Colonic mucosa (tissue), 4 donors: ENCODE measurements at regions of chr14 and their contacts with region 1.

Region 1: DNA sequence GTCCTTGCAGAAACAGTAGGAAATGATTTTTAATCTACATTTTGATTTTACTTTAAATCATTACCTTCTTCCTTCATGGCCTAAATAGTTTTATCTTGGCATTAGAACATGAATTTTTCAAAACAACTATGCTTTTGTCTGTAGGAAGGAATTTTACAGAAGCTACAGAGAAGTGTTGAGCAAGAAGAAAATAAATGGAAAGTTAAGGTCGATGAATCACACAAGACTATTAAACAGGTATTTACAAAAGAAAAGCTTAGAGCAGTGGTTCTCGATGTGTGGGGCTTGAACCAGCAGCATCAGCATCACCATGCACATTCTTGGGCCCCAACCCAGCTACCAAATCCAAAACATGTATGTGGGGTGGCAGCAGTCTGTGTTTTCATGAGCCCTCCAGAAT is 91.6 kb downstream of the KTN1 start:
- DNase-seq: no peak
- H3K4me3 ChIP-seq: no peak overlapping the region
- H3K27ac ChIP-seq: no peak overlapping the region
- H3K4me1 ChIP-seq: no peaks in the 10 kb centered on the region
- H3K27me3 ChIP-seq: no peaks in the 10 kb centered on the region
- CTCF ChIP-seq: no peak

Region 2: GRCh38 chr14:55609681-55610080 is 62.0 kb before region 1 on chr14:
- intact Hi-C with region 1: no loop called
- DNase-seq: no peak
- H3K4me3 ChIP-seq: no peak overlapping the region
- H3K27ac ChIP-seq: no peak overlapping the region
- H3K4me1 ChIP-seq: no peaks in the 10 kb centered on the region
- H3K27me3 ChIP-seq: no peaks in the 10 kb centered on the region
- CTCF ChIP-seq: no peak

Region 3: GRCh38 chr14:55638665-55639064 is 33.0 kb before region 1 on chr14:
- intact Hi-C with region 1: loop called (anchors 5 kb)
- DNase-seq: no peak
- H3K4me3 ChIP-seq: no peak overlapping the region
- H3K27ac ChIP-seq: no peak overlapping the region
- H3K4me1 ChIP-seq: no peaks in the 10 kb centered on the region
- H3K27me3 ChIP-seq: no peaks in the 10 kb centered on the region
- CTCF ChIP-seq: no peak

Region 4: GRCh38 chr14:55701638-55702037 is 30.0 kb after region 1 on chr14:
- intact Hi-C with region 1: no loop called
- DNase-seq: no peak
- H3K4me3 ChIP-seq: no peak overlapping the region
- H3K27ac ChIP-seq: no peak overlapping the region
- H3K4me1 ChIP-seq: no peaks in the 10 kb centered on the region
- H3K27me3 ChIP-seq: no peaks in the 10 kb centered on the region
- CTCF ChIP-seq: no peak